K562 (cell line): ENCODE measurements at regions of chr20 and their contacts with region 1.

Region 1: DNA sequence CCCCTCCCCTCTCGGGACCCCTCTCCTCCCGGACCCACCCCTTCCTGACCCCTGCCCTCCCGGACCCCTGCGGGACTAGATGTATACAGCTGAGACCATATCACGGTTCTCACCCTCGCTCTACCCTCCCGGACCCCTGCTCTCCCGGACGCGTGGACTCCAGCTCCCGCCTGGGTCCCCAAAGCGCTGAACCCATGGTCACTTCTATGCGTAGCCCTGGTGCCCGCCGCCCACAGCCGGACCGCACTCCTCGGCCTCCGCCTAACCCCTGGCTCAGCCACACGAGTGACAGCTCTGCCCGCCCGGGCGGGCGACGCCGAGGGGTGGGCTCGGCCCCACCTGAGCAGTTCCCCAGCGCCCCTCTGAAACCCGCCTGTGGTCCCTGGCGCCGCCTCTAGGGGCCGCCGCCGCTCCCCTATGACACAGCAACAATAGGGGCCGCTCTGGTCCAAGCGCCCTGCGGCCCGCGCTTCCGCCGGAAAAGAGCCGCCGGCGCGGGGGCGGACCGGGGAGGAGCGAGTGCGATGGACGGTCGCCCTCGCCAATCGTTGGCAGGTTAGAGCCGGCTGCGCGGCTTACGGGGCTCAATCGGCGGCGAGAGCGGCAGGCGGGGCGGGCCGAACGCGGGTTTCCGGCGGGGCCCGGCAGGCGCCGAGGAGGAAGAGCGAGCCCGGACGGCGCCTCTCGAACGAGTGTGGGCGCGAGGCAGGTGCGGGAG is at the start of gene ADRM1:
- DNase-seq: peak; percentile 95 to 99 (median 96)
- ATAC-seq: peak; percentile 93
- H3K4me3 ChIP-seq: peak within 1 kb of the TSS; percentile 71
- H3K27ac ChIP-seq: peak within 1 kb of the TSS; percentile 93
- H3K4me1 ChIP-seq: peaks cover 14 to 71% of the 10 kb centered on the region in 2 experiments
- H3K27me3 ChIP-seq: no peaks in the 10 kb centered on the region
- CTCF ChIP-seq: peak; percentile 94 to 99 (median 96)
- EP300 ChIP-seq: 0 out of 2 replicates have a peak, but pooled peaks have one; percentile 34
- POLR2A ChIP-seq: peak; percentile 80
- RAD21 ChIP-seq: peak; percentile 19 to 40; a peak in 2 of 4 replicates
- polyA plus RNA-seq, gene ADRM1: 5.0 to 21.6 TPM

Region 2: GRCh38 chr20:61500791-61501321 is 801.6 kb before region 1 on chr20:
- CTCF ChIA-PET with region 1: no interaction called
- POLR2A ChIA-PET with region 1: no interaction called
- in situ Hi-C with region 1: no loop called
- intact Hi-C with region 1: no loop called
- DNase-seq: no peak
- ATAC-seq: no peak; the same call in 2 of the 3 replicates
- H3K4me3 ChIP-seq: no peak overlapping the region
- H3K27ac ChIP-seq: no peak overlapping the region
- H3K4me1 ChIP-seq: peaks cover 0 to 4% of the 10 kb centered on the region in 2 experiments; a peak in 1 of 5 replicates
- H3K27me3 ChIP-seq: peaks cover 22 to 55% of the 10 kb centered on the region in 2 experiments
- CTCF ChIP-seq: no peak; a peak in 1 of 6 replicates
- EP300 ChIP-seq: 0 out of 2 replicates have a peak, but pooled peaks have one; percentile 9
- POLR2A ChIP-seq: no peak
- RAD21 ChIP-seq: no peak

Region 3: GRCh38 chr20:61980700-61981583 is 321.6 kb before region 1 on chr20:
- CTCF ChIA-PET with region 1: no interaction called
- POLR2A ChIA-PET with region 1: no interaction called
- in situ Hi-C with region 1: no loop called
- intact Hi-C with region 1: loop called (anchors 10 kb)
- DNase-seq: peak; percentile 73 to 79 (median 76)
- ATAC-seq: peak; percentile 98
- H3K4me3 ChIP-seq: no peak overlapping the region
- H3K27ac ChIP-seq: no peak overlapping the region
- H3K4me1 ChIP-seq: peaks cover 0 to 19% of the 10 kb centered on the region in 2 experiments; a peak in 1 of 5 replicates
- H3K27me3 ChIP-seq: no peaks in the 10 kb centered on the region
- CTCF ChIP-seq: peak; percentile 91 to 97 (median 94)
- EP300 ChIP-seq: no peak
- POLR2A ChIP-seq: no peak
- RAD21 ChIP-seq: peak; percentile 26 to 70

Region 4: DNA sequence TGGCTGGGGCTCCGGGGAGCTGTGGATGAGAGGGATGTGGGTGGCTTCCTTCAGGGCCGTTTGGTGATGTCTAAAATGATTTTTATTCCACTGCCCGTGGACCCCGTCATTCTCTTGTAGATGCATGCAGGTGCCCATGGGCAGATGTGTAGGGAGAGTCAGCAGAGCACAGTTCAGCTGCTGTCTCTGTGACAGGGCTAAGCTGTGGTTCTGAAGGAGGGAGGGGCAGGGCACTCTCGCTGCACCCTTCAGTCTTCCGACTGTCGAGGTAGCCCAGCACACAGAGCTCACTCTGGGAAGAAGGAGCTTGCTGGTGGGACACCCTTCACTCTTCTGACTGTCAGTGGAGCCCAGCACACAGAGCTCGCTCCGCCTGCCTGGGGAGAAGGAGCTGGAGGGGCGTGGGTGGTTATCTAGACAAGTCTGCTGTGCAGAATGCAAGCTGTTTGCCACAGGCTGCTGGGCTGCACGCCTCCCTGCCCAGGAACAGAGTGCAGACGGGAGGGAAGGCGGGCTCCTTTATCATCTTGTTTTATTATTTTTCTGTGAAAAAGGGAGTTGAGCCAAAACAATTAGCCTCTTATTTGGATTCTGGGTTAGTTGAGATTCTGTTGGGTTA is 28.1 kb before region 1 on chr20:
- CTCF ChIA-PET with region 1: no interaction called
- POLR2A ChIA-PET with region 1: no interaction called
- in situ Hi-C with region 1: no loop called
- intact Hi-C with region 1: no loop called
- DNase-seq: peak; percentile 63 to 85 (median 78)
- ATAC-seq: peak; percentile 98
- H3K4me3 ChIP-seq: no peak overlapping the region
- H3K27ac ChIP-seq: no peak overlapping the region
- H3K4me1 ChIP-seq: peaks cover 11 to 18% of the 10 kb centered on the region in 2 experiments; a peak in 4 of 5 replicates
- H3K27me3 ChIP-seq: no peaks in the 10 kb centered on the region
- CTCF ChIP-seq: no peak
- EP300 ChIP-seq: no peak; the same call in 1 of the 2 replicates
- POLR2A ChIP-seq: no peak
- RAD21 ChIP-seq: no peak

Region 5: DNA sequence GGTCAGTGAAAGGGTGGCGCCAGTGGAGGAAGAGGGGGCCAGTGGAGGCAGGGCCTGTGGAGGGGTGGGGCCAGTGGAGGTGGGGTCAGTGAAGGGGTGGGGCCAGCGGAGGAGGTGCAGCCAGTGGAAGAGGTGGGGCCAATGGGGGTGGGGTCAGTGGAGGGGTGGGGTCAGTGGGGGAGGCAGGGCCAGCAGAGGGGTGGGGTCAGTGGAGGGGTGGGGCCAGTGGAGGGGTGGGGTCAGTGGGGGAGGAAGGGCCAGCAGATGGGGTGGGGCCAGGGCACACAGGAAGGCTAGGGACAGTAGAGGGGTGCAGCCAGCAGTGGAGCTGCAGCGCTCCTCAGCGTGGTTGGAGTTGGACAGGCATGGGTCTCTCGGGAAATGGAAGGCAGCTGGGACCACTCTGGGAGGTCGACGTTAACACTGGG is 19.0 kb after region 1 on chr20:
- CTCF ChIA-PET with region 1: no interaction called
- POLR2A ChIA-PET with region 1: interaction called, 19 read pairs
- in situ Hi-C with region 1: no loop called
- intact Hi-C with region 1: no loop called
- DNase-seq: peak; percentile 75 to 96 (median 94)
- ATAC-seq: peak; percentile 92
- H3K4me3 ChIP-seq: no peak overlapping the region
- H3K27ac ChIP-seq: no peak overlapping the region
- H3K4me1 ChIP-seq: peaks cover 2 to 53% of the 10 kb centered on the region in 2 experiments; a peak in 2 of 5 replicates
- H3K27me3 ChIP-seq: no peaks in the 10 kb centered on the region
- CTCF ChIP-seq: peak in 1 of 3 experiments; percentile 5; a peak in 1 of 6 replicates
- EP300 ChIP-seq: no peak
- POLR2A ChIP-seq: no peak
- RAD21 ChIP-seq: no peak

Region 6: GRCh38 chr20:62351432-62352401 is 49.2 kb after region 1 on chr20:
- CTCF ChIA-PET with region 1: no interaction called
- POLR2A ChIA-PET with region 1: no interaction called
- in situ Hi-C with region 1: no loop called
- intact Hi-C with region 1: no loop called
- DNase-seq: no peak
- ATAC-seq: no peak
- H3K4me3 ChIP-seq: no peak overlapping the region
- H3K27ac ChIP-seq: no peak overlapping the region
- H3K4me1 ChIP-seq: peaks cover under 1 to 63% of the 10 kb centered on the region in 2 experiments
- H3K27me3 ChIP-seq: no peaks in the 10 kb centered on the region
- CTCF ChIP-seq: no peak
- EP300 ChIP-seq: no peak
- POLR2A ChIP-seq: no peak
- RAD21 ChIP-seq: no peak

Region 7: GRCh38 chr20:62386383-62387218 is 84.1 kb after region 1 on chr20 and contains the start of gene RPS21:
- CTCF ChIA-PET with region 1: interaction called, 14 read pairs
- POLR2A ChIA-PET with region 1: interaction called, 6 read pairs
- in situ Hi-C with region 1: no loop called
- intact Hi-C with region 1: loop called (anchors 1 kb)
- DNase-seq: peak; percentile 87 to 96 (median 92)
- ATAC-seq: peak; percentile 92
- H3K4me3 ChIP-seq: peak within 1 kb of the TSS; percentile 100
- H3K27ac ChIP-seq: peak within 1 kb of the TSS; percentile 95
- H3K4me1 ChIP-seq: peaks cover 13 to 39% of the 10 kb centered on the region in 2 experiments; a peak in 4 of 5 replicates
- H3K27me3 ChIP-seq: no peaks in the 10 kb centered on the region
- CTCF ChIP-seq: no peak
- EP300 ChIP-seq: no peak; the same call in 1 of the 2 replicates
- POLR2A ChIP-seq: peak; percentile 92
- RAD21 ChIP-seq: no peak
- polyA plus RNA-seq, gene RPS21: 3,588 to 3,968 TPM

Region 8: DNA sequence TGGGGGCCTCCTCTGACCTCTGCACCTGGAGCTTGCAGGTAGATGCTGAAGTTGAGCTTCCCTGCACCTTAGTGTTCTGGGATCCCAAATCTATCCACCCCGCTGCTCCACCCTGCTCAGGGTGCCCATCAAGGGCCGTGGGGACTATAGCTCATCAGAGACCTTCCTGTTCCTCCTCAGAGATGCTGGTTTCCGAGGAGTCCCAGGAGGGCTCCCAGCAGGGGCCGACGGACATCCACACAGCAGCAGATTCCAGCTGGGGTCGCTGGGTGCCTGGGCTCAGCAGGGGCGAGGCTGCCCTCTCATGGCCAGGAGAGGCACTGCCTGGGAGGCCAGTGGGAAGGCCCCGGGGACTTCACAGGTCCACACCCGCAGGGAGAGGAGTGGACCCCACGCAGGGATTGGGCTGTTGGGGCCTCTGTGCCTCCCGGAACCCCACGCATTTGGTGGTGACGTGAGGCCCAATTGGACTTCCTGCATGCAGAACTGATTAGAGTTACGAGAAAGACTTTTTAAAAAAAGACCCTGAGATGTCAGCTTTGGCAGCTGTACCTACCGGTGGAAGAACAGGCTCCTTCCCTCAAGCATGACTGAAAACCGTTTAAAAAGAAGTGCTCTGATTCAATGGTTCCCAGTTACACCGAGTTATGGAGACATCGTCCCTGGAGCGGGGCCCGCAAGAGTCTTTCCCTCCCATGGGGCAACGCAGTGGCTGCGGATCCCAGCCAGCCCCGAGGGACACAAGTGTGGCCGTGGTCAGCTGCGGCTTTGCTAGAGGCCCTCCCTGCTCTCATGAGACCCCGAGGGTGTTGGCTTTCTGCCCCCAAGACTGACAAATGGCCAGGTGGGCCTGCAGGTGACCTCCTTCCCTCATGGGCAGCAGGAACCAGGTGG is 314.5 kb after region 1 on chr20:
- CTCF ChIA-PET with region 1: interaction called, 3 read pairs
- POLR2A ChIA-PET with region 1: no interaction called
- in situ Hi-C with region 1: loop called (anchors 10 kb)
- intact Hi-C with region 1: no loop called
- DNase-seq: peak; percentile 82 to 87 (median 86)
- ATAC-seq: peak; percentile 100
- H3K4me3 ChIP-seq: no peak overlapping the region
- H3K27ac ChIP-seq: no peak overlapping the region
- H3K4me1 ChIP-seq: peaks cover 0 to 44% of the 10 kb centered on the region in 2 experiments; a peak in 2 of 5 replicates
- H3K27me3 ChIP-seq: peaks cover 8 to 21% of the 10 kb centered on the region in 2 experiments
- CTCF ChIP-seq: peak; percentile 96 to 98 (median 96)
- EP300 ChIP-seq: no peak
- POLR2A ChIP-seq: no peak
- RAD21 ChIP-seq: peak; percentile 91 to 98

Region 9: GRCh38 chr20:62652051-62652926 is 349.8 kb after region 1 on chr20:
- CTCF ChIA-PET with region 1: no interaction called
- POLR2A ChIA-PET with region 1: no interaction called
- in situ Hi-C with region 1: no loop called
- intact Hi-C with region 1: no loop called
- DNase-seq: peak; percentile 61 to 79 (median 69)
- ATAC-seq: peak; percentile 81
- H3K4me3 ChIP-seq: no peak overlapping the region
- H3K27ac ChIP-seq: peak overlapping the region; percentile 66; the same call in 2 of the 3 replicates
- H3K4me1 ChIP-seq: peaks cover 19 to 77% of the 10 kb centered on the region in 2 experiments
- H3K27me3 ChIP-seq: no peaks in the 10 kb centered on the region
- CTCF ChIP-seq: no peak
- EP300 ChIP-seq: 0 out of 2 replicates have a peak, but pooled peaks have one; percentile 17
- POLR2A ChIP-seq: no peak
- RAD21 ChIP-seq: no peak